Dendritic cell treated with granulocyte-macrophage colony-stimulating factor and Interleukin-4, amounts not matched to agents 40 ng/mL and 50 ng/mL, for 4 days (primary cell): ENCODE measurements at regions of chr1 and their contacts with region 1.

Region 1: DNA sequence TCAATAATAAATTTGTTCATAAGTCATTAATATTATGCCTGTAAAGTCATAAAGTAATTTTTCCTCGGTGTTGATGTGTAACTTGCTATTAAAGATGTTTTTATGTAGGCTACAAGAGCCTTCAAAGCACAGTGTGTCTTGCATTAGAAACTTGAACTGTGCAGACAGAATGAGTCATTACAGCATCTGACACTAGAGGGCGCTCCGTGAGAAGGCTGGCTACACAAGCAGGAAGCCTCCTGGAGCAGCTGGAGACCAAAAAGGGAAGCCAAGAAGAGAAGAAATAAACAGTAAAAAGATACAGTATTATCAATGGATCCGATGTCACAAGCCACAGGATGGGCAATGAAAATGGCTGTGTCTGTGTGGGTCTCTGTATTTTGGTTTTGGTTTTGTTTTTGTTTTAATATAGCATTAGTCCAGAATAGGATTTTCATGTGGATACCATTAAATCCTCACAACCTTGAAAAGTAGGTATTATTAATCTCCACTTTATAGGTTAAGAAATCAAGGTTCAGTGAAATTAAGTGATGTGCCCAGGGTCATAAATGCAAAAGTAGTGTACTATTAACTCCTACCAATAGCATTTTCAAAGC is 16.1 kb upstream of the LRRC8D start:
- H3K4me3 Mint-ChIP-seq: no peak overlapping the region
- H3K27ac Mint-ChIP-seq: no peak overlapping the region
- H3K4me1 Mint-ChIP-seq: peaks cover 20% of the 10 kb centered on the region
- H3K27me3 Mint-ChIP-seq: peaks cover 1% of the 10 kb centered on the region

Region 2: GRCh38 chr1:89843281-89844121 is 38.8 kb after region 1 on chr1:
- intact Hi-C with region 1: loop called (anchors 5 kb)
- H3K4me3 Mint-ChIP-seq: peak overlapping the region; percentile 90
- H3K27ac Mint-ChIP-seq: peak overlapping the region; percentile 86
- H3K4me1 Mint-ChIP-seq: peaks cover 34% of the 10 kb centered on the region
- H3K27me3 Mint-ChIP-seq: no peaks in the 10 kb centered on the region